ENCODE measurements at regions of chr11 and their contacts with region 1.

Region 1: GRCh38 chr11:12318791-12319438 is 58.5 kb upstream of the PARVA start:
- DNase-seq: peak; percentile 89
- ATAC-seq: peak; percentile 70
- H3K4me3 ChIP-seq: no peak overlapping the region
- H3K27ac ChIP-seq: peak overlapping the region; percentile 96
- H3K4me1 ChIP-seq: peaks cover 23% of the 10 kb centered on the region
- H3K27me3 ChIP-seq: no peaks in the 10 kb centered on the region
- CTCF ChIP-seq: no peak
- POLR2A ChIP-seq: no peak
- RAD21 ChIP-seq: no peak

Region 2: DNA sequence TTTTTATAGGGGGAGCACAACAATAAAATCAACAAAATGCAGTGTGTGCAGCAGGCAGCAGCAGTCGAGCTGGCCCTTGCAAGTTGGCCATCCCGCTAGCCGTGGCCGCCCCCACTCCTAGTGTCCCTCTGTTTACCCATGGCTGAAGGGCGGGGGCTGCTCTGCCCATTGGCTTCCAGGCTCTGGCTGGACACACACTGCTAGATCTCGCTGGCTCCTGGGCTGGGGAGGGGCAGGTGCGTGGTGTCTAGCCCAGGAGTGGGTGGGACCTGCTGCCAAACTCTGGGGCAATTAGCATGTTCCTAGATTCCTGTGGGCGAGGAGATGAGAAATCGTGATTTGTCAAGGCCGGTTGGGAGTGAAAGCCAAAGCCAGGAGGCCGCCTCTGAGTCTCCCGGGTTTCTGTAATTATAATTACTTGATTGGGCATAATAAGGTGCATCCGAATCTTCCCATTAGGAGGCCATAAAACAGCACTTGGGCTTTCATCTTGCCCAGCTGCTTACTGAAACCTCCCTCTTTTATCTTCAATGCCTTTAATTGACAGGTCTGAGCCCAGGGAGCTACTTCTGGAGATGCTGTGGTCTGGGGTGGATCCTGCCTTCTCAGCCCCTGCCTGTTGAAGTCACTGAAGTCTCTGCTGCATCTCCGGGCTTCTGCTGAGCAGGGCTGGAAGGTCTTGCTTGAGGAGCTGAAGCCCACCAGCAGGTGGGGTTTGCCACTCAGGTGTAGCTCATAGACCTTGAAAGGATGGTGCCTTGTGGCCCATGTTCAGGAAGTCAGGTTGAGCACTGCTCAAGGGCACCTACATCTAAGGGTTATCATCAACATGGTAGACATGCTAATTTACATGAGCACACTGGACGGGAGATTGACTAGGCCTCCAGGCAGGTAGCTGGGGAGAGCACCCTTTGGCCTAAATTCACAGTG is 266.0 kb before region 1 on chr11:
- CTCF ChIA-PET with region 1: no interaction called
- POLR2A ChIA-PET with region 1: no interaction called
- dilution Hi-C with region 1: no loop called
- in situ Hi-C with region 1: no loop called
- intact Hi-C with region 1: no loop called
- DNase-seq: no peak
- ATAC-seq: no peak
- H3K4me3 ChIP-seq: no peak overlapping the region
- H3K27ac ChIP-seq: no peak overlapping the region
- H3K4me1 ChIP-seq: peaks cover 3% of the 10 kb centered on the region; the same call in 1 of the 2 replicates
- H3K27me3 ChIP-seq: no peaks in the 10 kb centered on the region
- CTCF ChIP-seq: no peak
- POLR2A ChIP-seq: no peak
- RAD21 ChIP-seq: no peak

Region 3: GRCh38 chr11:13140028-13140870 is 821.3 kb after region 1 on chr11:
- CTCF ChIA-PET with region 1: no interaction called
- POLR2A ChIA-PET with region 1: no interaction called
- dilution Hi-C with region 1: no loop called
- in situ Hi-C with region 1: loop called (anchors 25 kb)
- intact Hi-C with region 1: no loop called
- DNase-seq: peak; percentile 26
- ATAC-seq: peak; percentile 41; the same call in 1 of the 2 replicates
- H3K4me3 ChIP-seq: no peak overlapping the region
- H3K27ac ChIP-seq: no peak overlapping the region
- H3K4me1 ChIP-seq: peaks cover 11% of the 10 kb centered on the region
- H3K27me3 ChIP-seq: peaks cover 5% of the 10 kb centered on the region
- CTCF ChIP-seq: no peak
- POLR2A ChIP-seq: no peak
- RAD21 ChIP-seq: no peak

Region 4: GRCh38 chr11:13343931-13344717 is 1025.2 kb after region 1 on chr11:
- CTCF ChIA-PET with region 1: no interaction called
- POLR2A ChIA-PET with region 1: no interaction called
- dilution Hi-C with region 1: no loop called
- in situ Hi-C with region 1: loop called (anchors 25 kb)
- intact Hi-C with region 1: no loop called
- DNase-seq: peak; percentile 79
- ATAC-seq: peak; percentile 74
- H3K4me3 ChIP-seq: no peak overlapping the region
- H3K27ac ChIP-seq: no peak overlapping the region
- H3K4me1 ChIP-seq: peaks cover 11% of the 10 kb centered on the region
- H3K27me3 ChIP-seq: no peaks in the 10 kb centered on the region
- CTCF ChIP-seq: peak; percentile 87
- POLR2A ChIP-seq: no peak
- RAD21 ChIP-seq: peak; percentile 90